ENCODE measurements at regions of chr12 and their contacts with region 1.

Region 1: DNA sequence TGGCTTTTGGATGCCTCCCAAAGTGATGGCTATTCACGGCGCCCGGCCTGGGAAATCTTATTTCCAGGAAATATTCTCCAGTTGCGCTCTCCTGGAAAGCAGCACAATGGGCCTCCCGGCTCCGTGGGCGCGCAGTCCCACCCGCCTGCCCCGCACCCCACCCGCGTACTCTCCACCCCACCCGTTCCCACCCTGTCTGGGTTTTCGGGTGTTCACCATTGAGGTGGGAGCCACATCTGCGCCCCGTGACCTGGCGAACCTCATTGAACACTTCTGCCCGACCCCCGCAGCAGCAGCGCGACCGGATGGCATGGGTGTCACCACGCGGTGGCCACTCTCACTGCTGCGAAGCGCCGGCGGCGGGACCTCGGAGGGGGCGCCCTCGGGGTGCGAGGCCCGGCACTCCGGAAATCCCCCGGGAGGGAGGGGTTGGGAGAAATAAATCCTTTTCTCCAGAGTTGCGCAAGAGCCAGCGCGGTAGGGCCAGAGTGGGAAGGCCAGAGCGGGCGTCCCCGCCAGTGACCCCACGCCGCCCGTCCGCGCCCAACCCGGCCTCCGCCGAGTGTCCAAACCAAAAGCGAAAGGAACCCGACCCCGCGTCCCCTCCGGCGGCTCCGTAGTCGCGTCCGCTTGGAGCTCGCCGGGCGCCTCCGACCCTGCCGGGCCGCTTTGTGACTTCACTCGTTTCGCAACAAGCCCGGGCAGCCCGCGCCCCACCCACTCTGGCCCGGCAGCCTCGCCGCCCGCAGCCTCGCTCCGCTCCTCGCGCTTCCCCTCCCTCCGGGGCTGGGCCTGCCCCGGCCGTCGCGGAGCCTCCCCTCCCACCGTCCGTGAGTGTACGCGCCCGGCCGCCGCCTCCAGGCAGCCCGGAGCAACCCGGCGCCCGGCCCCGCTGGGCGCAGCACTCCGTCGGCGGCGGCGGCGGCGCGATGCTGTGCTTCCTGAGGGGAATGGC is at the start of gene DRAM1:
- DNase-seq: peak; percentile 82
- ATAC-seq: peak; percentile 81 to 92 (median 84)
- H3K4me3 ChIP-seq: peak within 1 kb of the TSS; percentile 88
- H3K4me3 Mint-ChIP-seq: peak within 1 kb of the TSS; percentile 94
- H3K27ac ChIP-seq: peak within 1 kb of the TSS; percentile 90
- H3K27ac Mint-ChIP-seq: peak within 1 kb of the TSS; percentile 84 to 92
- H3K4me1 ChIP-seq: peaks cover 15% of the 10 kb centered on the region
- H3K4me1 Mint-ChIP-seq: peaks cover 11 to 12% of the 10 kb centered on the region in 2 donors
- H3K27me3 ChIP-seq: no peaks in the 10 kb centered on the region
- H3K27me3 Mint-ChIP-seq: no peaks in the 10 kb centered on the region
- CTCF ChIP-seq: peak; percentile 20
- total RNA-seq, gene DRAM1: 9.8 to 10.5 (median 10.0) TPM

Region 2: GRCh38 chr12:101323255-101323654 is 553.9 kb before region 1 on chr12:
- intact Hi-C with region 1: no loop called
- DNase-seq: no peak
- ATAC-seq: no peak
- H3K4me3 ChIP-seq: no peak overlapping the region
- H3K4me3 Mint-ChIP-seq: no peak overlapping the region
- H3K27ac ChIP-seq: no peak overlapping the region
- H3K27ac Mint-ChIP-seq: no peak overlapping the region
- H3K4me1 ChIP-seq: no peaks in the 10 kb centered on the region
- H3K4me1 Mint-ChIP-seq: no peaks in the 10 kb centered on the region
- H3K27me3 ChIP-seq: no peaks in the 10 kb centered on the region
- H3K27me3 Mint-ChIP-seq: no peaks in the 10 kb centered on the region
- CTCF ChIP-seq: no peak

Region 3: DNA sequence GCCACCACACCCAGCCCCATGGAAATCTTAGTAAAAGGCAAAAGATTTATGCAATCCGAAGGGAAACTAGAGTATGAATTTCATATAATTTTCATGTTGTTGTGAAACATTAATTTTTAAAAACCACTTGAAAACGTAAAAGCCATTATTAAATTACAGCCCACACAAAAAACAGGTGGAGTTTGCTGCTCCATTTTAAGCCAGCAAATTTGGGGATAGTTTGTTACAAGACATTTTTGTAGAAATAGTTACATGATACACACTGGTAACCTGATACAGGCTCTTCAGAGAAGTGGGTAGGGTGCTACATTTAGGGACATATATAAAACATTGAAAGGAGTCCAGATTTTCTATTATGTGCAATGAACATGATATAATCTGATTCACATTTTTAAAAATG is 64.0 kb before region 1 on chr12:
- intact Hi-C with region 1: no loop called
- DNase-seq: no peak
- ATAC-seq: no peak
- H3K4me3 ChIP-seq: no peak overlapping the region
- H3K4me3 Mint-ChIP-seq: no peak overlapping the region
- H3K27ac ChIP-seq: no peak overlapping the region
- H3K27ac Mint-ChIP-seq: peak overlapping the region; percentile 31 to 35
- H3K4me1 ChIP-seq: peaks cover 28% of the 10 kb centered on the region
- H3K4me1 Mint-ChIP-seq: peaks cover 64 to 66% of the 10 kb centered on the region in 2 donors
- H3K27me3 ChIP-seq: no peaks in the 10 kb centered on the region
- H3K27me3 Mint-ChIP-seq: no peaks in the 10 kb centered on the region
- CTCF ChIP-seq: no peak

Region 4: DNA sequence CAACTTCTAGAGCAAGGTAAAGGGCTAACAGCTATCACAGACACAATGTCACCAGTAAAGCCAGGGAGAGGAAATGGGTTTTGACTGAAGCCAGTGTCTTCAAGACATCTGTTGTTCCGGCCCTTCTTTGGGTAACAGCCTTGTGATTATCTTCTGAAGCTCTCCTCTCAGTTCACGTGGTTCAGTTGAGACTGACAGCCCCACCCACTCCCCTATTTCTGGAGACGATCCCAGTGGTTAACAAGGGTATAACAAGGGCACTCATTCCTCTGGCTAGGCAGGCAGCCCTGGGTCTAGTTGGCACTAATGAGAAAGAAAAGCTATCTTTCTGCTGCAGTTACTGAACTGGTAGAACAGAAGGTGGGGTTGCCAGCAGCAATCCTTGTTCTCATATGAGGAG is 53.2 kb before region 1 on chr12:
- intact Hi-C with region 1: loop called (anchors 2 kb)
- DNase-seq: peak; percentile 53 to 90
- ATAC-seq: peak; percentile 92 to 97 (median 96)
- H3K4me3 ChIP-seq: no peak overlapping the region
- H3K4me3 Mint-ChIP-seq: peak overlapping the region; percentile 79
- H3K27ac ChIP-seq: peak overlapping the region; percentile 65
- H3K27ac Mint-ChIP-seq: peak overlapping the region; percentile 84 to 90
- H3K4me1 ChIP-seq: peaks cover 70% of the 10 kb centered on the region
- H3K4me1 Mint-ChIP-seq: peaks cover 88 to 92% of the 10 kb centered on the region in 2 donors
- H3K27me3 ChIP-seq: no peaks in the 10 kb centered on the region
- H3K27me3 Mint-ChIP-seq: no peaks in the 10 kb centered on the region
- CTCF ChIP-seq: peak; percentile 45

Region 5: DNA sequence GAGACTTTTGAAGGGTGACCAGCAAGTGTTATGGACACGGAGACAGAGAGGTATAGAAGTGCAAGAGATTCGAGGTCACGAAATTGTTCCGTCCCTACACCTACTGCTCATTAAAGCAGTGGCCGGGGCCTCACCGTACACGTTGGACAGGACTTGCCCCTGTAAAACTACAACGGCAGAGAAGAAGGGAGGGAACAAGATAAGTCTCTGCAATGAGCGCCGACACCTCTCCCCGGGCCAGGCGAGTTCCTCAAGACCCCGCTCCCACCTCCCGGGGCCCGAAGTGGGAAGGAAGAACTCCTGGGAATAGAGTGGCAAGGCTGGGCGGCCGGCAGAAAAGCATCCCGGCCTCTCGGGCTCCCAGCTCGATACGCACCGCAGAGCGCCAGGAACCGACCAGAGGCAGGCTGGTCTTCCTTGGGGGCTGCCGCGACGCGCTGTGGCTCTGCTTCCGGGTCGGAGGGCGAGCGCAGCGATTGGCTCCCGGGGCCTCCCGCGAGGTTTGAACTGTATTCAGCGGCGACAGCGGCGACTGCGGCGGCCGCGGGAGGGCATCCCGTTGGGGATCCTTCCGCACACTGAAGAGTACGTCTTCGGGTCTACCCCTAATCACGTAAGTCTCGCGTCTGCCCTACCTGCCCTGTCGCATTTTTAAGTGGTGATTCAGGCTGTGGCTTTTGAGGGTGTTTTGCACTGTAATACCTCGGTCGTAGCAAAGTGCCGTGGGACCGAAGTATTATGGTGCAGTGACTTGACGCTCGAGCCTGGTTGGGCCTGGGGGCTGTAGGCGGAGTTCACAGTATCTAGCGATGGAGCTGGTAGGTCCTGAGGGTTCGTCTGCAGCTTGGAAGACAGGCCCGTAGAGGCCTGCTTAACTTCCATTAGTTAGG is 242.8 kb after region 1 on chr12 and contains the starts of genes NUP37 and PARPBP:
- intact Hi-C with region 1: loop called (anchors 5 kb)
- DNase-seq: peak; percentile 94 to 95
- ATAC-seq: peak; percentile 93 to 95 (median 94)
- H3K4me3 ChIP-seq: peak within 1 kb of the TSS; percentile 76
- H3K4me3 Mint-ChIP-seq: peak within 1 kb of the TSS; percentile 92
- H3K27ac ChIP-seq: peak within 1 kb of the TSS; percentile 80
- H3K27ac Mint-ChIP-seq: peak within 1 kb of the TSS; percentile 89 to 94
- H3K4me1 ChIP-seq: peaks cover 5% of the 10 kb centered on the region
- H3K4me1 Mint-ChIP-seq: peaks cover 16 to 17% of the 10 kb centered on the region in 2 donors
- H3K27me3 ChIP-seq: no peaks in the 10 kb centered on the region
- H3K27me3 Mint-ChIP-seq: no peaks in the 10 kb centered on the region
- CTCF ChIP-seq: no peak
- total RNA-seq, gene NUP37: 10.6 to 14.7 (median 10.7) TPM
- total RNA-seq, gene PARPBP: 2.8 to 5.6 (median 3.5) TPM

Measured in natural killer cell (primary cell).